GM10248 (cell line): ENCODE measurements at regions of chr7 and their contacts with region 1.

Region 1: DNA sequence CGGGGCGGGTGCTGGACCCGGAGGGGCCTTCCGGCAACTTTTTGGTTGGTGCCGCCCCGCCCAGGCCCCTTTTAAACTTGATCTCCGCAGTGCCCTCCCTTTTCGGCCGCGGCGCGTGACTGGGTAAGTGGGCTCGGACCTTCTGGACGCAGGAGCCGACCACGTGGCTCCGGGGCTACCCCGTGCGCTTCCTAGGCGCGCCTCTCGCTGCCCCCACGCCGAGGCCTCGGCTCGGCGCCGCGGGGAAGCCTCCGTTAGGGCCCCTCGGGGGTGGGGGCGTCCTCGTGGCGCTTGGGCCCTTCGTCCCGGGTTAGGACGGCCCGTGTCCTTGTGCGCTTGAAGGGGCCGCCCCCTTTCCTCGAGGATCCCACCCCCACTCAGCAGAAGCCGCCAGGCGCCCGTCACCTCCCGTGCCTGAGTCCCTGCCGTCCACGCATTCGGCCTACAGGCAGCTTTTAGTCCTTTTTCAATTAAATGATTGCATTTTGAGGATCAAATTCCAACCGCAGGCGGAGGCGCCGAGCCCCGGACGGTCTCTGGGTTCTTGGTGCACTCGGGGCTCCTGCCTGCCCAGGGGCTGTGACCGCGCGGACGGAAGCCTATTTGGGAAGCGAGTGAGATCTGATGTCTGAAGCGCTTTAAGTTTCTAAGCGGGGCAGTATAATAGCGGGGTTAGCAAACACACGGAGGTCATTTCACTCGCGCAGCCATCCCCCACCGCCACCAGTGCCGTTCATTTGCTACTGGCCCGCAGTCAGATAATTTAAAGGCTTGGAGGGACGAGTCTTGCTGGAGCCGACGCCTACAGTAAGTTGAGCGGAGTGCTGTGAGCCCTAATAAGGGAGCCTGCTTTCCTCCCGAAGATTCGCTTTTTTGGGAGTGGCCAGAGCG is 31.8 kb upstream of the TOMM7 start:
- DNase-seq: peak; percentile 96
- CTCF ChIP-seq: no peak

Region 2: GRCh38 chr7:22802426-22802825 is 52.0 kb before region 1 on chr7:
- CTCF ChIA-PET with region 1: no interaction called
- POLR2A ChIA-PET with region 1: no interaction called
- DNase-seq: no peak
- CTCF ChIP-seq: no peak

Region 3: GRCh38 chr7:22885797-22886261 is 31.4 kb after region 1 on chr7:
- CTCF ChIA-PET with region 1: interaction called, 6 read pairs
- POLR2A ChIA-PET with region 1: interaction called, 10 read pairs
- DNase-seq: peak; percentile 73
- CTCF ChIP-seq: no peak